Ovary (tissue), 10 donors: ENCODE measurements at regions of chr7 and their contacts with region 1.

Region 1: DNA sequence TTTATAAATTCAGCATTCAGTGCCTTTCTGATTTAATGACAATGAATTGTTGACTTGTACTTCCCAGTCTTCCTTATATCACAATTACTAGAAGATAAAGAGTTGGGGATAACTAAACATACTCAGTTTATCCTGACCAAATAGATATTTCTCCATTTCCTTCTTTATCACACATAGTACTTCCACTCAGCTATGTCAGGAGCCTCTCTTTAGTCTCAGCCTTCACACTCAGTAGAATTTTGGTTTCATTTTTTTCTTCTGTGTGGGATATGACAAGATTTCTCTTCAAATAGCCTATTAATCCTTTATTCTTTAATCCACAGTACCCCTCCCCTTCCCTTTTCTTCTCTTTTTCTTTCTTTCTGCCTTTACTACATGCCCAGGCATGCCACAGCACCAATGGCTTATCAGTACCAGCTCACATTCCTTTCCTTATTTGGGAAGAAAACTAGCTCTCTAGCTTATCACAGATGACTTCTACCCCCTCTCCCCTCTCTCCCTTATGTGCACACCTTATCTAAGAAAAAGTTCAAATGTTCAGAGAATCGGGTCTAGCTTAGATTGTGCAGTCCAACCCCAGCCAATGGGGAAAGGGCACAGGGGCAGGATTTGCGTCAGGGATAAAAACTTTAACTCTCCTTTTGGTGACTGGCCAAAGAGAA is 109.0 kb downstream of the PHF14 start:
- DNase-seq: no peak
- H3K4me3 ChIP-seq: no peak overlapping the region
- H3K27ac ChIP-seq: no peak overlapping the region
- H3K4me1 ChIP-seq: no peaks in the 10 kb centered on the region
- H3K27me3 ChIP-seq: no peaks in the 10 kb centered on the region
- CTCF ChIP-seq: no peak
- EP300 ChIP-seq: no peak
- POLR2A ChIP-seq: no peak

Region 2: GRCh38 chr7:10998996-10999757 is 83.5 kb before region 1 on chr7:
- intact Hi-C with region 1: loop called in 1 of 4 experiments (anchors 5 kb)
- DNase-seq: no peak
- H3K4me3 ChIP-seq: no peak overlapping the region
- H3K27ac ChIP-seq: no peak overlapping the region
- H3K4me1 ChIP-seq: no peaks in the 10 kb centered on the region
- H3K27me3 ChIP-seq: no peaks in the 10 kb centered on the region
- CTCF ChIP-seq: no peak
- EP300 ChIP-seq: no peak
- POLR2A ChIP-seq: no peak

Region 3: DNA sequence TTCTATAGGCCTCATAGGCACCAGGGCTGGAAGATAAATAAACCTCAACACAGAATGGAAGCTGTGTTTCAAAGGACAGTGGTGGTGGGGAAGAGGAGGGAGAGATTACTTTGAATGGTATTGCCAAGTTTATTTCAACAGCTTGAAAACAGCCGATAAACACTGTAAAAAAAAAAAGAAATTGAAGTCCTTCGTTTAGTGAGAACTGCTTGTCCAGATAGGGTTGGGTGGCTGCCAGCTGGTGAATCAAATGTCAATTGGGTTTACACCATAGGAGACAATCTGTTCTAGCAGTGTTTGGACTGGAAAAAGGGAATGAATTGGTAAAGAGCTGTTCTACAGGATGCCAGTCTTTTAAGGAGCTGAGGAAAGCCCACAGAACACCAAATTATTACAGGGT is 145.8 kb after region 1 on chr7:
- intact Hi-C with region 1: loop called in 1 of 4 experiments (anchors 5 kb)
- DNase-seq: peak; percentile 78 to 85 (median 84)
- H3K4me3 ChIP-seq: no peak overlapping the region
- H3K27ac ChIP-seq: peak overlapping the region; percentile 12 to 18
- H3K4me1 ChIP-seq: peaks cover 5% of the 10 kb centered on the region
- H3K27me3 ChIP-seq: no peaks in the 10 kb centered on the region
- CTCF ChIP-seq: no peak
- EP300 ChIP-seq: no peak
- POLR2A ChIP-seq: no peak

Region 4: GRCh38 chr7:11437987-11438386 is 355.3 kb after region 1 on chr7:
- intact Hi-C with region 1: no loop called
- DNase-seq: no peak
- H3K4me3 ChIP-seq: no peak overlapping the region
- H3K27ac ChIP-seq: no peak overlapping the region
- H3K4me1 ChIP-seq: no peaks in the 10 kb centered on the region
- H3K27me3 ChIP-seq: no peaks in the 10 kb centered on the region
- CTCF ChIP-seq: no peak
- EP300 ChIP-seq: no peak
- POLR2A ChIP-seq: no peak